Ascending aorta (tissue), 2 donors: ENCODE measurements at regions of chr12 and their contacts with region 1.

Region 1: GRCh38 chr12:57461276-57461916 is 1.8 kb downstream of the GLI1 start:
- DNase-seq: peak in 1 of 2 donors; percentile 90
- H3K4me3 ChIP-seq: peak overlapping the region; percentile 71 to 89
- H3K27ac ChIP-seq: peak overlapping the region; percentile 76 to 87
- H3K4me1 ChIP-seq: peaks cover 3 to 30% of the 10 kb centered on the region in 2 donors
- H3K27me3 ChIP-seq: no peaks in the 10 kb centered on the region
- CTCF ChIP-seq: no peak

Region 2: GRCh38 chr12:57487597-57488401 is 26.4 kb after region 1 on chr12 and contains the start of gene MARS1:
- intact Hi-C with region 1: loop called (anchors 2 kb)
- DNase-seq: peak; percentile 82 to 98
- H3K4me3 ChIP-seq: peak within 1 kb of the TSS; percentile 75
- H3K27ac ChIP-seq: peak within 1 kb of the TSS; percentile 63 to 84
- H3K4me1 ChIP-seq: peaks cover 8 to 10% of the 10 kb centered on the region in 2 donors
- H3K27me3 ChIP-seq: no peaks in the 10 kb centered on the region
- CTCF ChIP-seq: no peak
- total RNA-seq, gene MARS1: 78.0 TPM